Aorta (tissue), 5 donors: ENCODE measurements at regions of chr10 and their contacts with region 1.

Region 1: GRCh38 chr10:63629363-63630084 is 108.3 kb downstream of the REEP3 start:
- DNase-seq: peak; percentile 97 to 99
- ATAC-seq: peak; percentile 92
- H3K4me3 ChIP-seq: peak overlapping the region; percentile 44 to 66
- H3K27ac ChIP-seq: peak overlapping the region; percentile 99 to 100
- H3K4me1 ChIP-seq: peaks cover 0 to 2% of the 10 kb centered on the region in 2 donors
- H3K27me3 ChIP-seq: no peaks in the 10 kb centered on the region

Region 2: DNA sequence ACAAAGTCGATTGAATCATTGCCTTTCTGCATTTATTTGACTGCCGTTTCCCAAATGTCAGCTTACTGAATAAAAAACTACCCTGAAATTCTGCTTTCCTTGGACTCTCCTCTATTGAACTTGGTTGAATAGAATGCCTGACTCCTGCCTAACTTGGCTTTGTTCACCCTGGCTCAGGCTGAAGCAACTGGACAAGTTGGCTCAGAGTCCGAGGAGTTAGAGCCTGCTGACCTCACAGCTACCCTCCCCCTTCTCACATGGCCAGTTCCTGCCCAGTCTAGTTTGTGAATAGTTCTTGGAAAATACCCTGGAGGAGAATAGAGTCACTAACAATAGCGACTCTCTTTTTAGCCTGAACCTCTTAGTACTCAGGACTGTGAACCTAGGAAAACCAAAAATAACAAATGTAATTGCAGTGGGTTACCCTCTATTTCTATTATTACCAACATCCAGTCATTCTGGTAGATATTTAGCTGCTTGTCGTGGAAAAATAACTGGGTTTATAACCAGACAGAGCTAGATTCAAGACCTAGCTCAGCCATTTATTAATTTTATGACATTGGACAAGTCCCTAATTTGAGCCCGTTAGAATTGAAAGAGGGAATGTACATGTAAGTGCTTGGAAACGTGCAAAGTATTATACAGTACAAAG is 513.7 kb before region 1 on chr10:
- intact Hi-C with region 1: loop called in 1 of 2 experiments (anchors 2 kb)
- DNase-seq: peak; percentile 91 to 93
- ATAC-seq: peak; percentile 96
- H3K4me3 ChIP-seq: no peak overlapping the region
- H3K27ac ChIP-seq: peak overlapping the region; percentile 20 to 28
- H3K4me1 ChIP-seq: peaks cover 0 to 2% of the 10 kb centered on the region in 2 donors
- H3K27me3 ChIP-seq: no peaks in the 10 kb centered on the region

Region 3: DNA sequence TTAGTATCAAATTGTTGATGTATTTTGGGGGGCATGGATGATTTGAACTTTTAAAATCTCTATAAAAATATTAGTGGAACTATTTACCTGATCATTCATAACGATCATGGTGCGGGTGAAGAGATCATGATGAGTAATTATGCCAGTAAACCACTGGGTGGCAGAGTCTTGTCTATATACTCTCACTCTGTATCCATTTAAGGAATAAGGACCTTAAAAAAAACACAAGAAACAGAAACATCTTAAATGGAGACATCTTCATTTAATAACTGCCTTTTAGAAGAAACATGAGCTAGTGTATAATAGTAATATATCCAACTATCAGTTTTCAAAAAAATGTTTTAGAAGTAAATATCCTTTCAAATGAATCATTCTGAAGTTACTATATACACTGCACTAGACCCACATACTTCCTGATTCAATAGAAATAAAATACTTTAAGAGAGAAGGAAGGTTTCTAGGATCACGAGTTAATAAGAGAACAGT is 412.4 kb before region 1 on chr10:
- intact Hi-C with region 1: loop called (anchors 10 kb)
- DNase-seq: no peak
- ATAC-seq: peak; percentile 88
- H3K4me3 ChIP-seq: no peak overlapping the region
- H3K27ac ChIP-seq: no peak overlapping the region
- H3K4me1 ChIP-seq: no peaks in the 10 kb centered on the region
- H3K27me3 ChIP-seq: no peaks in the 10 kb centered on the region

Region 4: GRCh38 chr10:63465293-63466143 is 164.0 kb before region 1 on chr10 and contains the start of gene JMJD1C:
- intact Hi-C with region 1: loop called (anchors 5 kb)
- DNase-seq: peak; percentile 87 to 94
- ATAC-seq: peak; percentile 96
- H3K4me3 ChIP-seq: peak within 1 kb of the TSS; percentile 60 to 79
- H3K27ac ChIP-seq: peak within 1 kb of the TSS; percentile 58 to 68
- H3K4me1 ChIP-seq: peaks cover 0 to 2% of the 10 kb centered on the region in 2 donors
- H3K27me3 ChIP-seq: no peaks in the 10 kb centered on the region
- total RNA-seq, gene JMJD1C: 103 to 108 TPM

Region 5: GRCh38 chr10:63588436-63589167 is 40.9 kb before region 1 on chr10:
- intact Hi-C with region 1: loop called (anchors 5 kb)
- DNase-seq: no peak
- ATAC-seq: no peak
- H3K4me3 ChIP-seq: no peak overlapping the region
- H3K27ac ChIP-seq: no peak overlapping the region
- H3K4me1 ChIP-seq: peaks cover 0 to 8% of the 10 kb centered on the region in 2 donors
- H3K27me3 ChIP-seq: no peaks in the 10 kb centered on the region

Region 6: DNA sequence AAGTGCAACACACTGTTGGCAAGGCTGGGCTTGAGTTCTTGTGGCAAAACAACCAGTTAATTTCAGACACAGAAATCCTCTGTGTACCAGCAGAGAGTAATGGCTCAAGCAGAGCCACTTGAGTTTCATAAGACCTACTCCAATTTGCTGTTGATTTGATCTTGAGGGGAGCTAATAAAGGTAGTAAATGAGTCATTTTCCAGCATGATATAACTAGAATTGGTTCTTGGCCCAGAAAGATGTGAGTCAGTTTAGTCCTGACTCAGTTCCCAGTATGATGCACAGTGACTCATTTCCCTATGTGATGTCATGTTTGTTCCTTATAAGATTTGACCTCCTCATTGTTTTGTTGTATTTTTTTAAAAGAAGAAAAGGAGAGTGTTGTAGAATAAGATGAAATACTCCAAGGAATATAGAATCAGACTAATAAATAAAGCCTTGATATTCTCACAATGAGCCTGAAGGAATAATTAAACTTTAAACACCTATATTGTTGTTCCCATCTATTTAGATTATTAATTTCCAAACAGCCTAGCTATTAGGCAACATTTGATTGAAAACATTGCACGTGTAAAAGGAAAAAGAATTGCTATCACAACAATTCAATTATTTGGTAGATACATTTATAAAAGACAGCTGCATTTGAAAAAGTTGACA is 77.9 kb after region 1 on chr10:
- intact Hi-C with region 1: loop called in 1 of 2 experiments (anchors 5 kb)
- DNase-seq: no peak
- ATAC-seq: peak; percentile 87
- H3K4me3 ChIP-seq: no peak overlapping the region
- H3K27ac ChIP-seq: peak overlapping the region in 1 of 2 donors; percentile 46
- H3K4me1 ChIP-seq: peaks cover 2 to 8% of the 10 kb centered on the region in 2 donors
- H3K27me3 ChIP-seq: no peaks in the 10 kb centered on the region

Region 7: GRCh38 chr10:63819753-63820329 is 190.3 kb after region 1 on chr10:
- intact Hi-C with region 1: loop called in 1 of 2 experiments (anchors 10 kb)
- DNase-seq: peak; percentile 84 to 90
- ATAC-seq: peak; percentile 66
- H3K4me3 ChIP-seq: no peak overlapping the region
- H3K27ac ChIP-seq: no peak overlapping the region
- H3K4me1 ChIP-seq: no peaks in the 10 kb centered on the region
- H3K27me3 ChIP-seq: no peaks in the 10 kb centered on the region